Keratinocyte (primary cell): ENCODE measurements at regions of chr21 and their contacts with region 1.

Region 1: GRCh38 chr21:42089093-42089631 is 18.0 kb downstream of the UMODL1 start:
- DNase-seq: no peak
- H3K4me3 ChIP-seq: no peak overlapping the region
- H3K27ac ChIP-seq: no peak overlapping the region
- H3K4me1 ChIP-seq: peaks cover 6% of the 10 kb centered on the region
- H3K27me3 ChIP-seq: peaks cover 20% of the 10 kb centered on the region
- CTCF ChIP-seq: no peak

Region 2: DNA sequence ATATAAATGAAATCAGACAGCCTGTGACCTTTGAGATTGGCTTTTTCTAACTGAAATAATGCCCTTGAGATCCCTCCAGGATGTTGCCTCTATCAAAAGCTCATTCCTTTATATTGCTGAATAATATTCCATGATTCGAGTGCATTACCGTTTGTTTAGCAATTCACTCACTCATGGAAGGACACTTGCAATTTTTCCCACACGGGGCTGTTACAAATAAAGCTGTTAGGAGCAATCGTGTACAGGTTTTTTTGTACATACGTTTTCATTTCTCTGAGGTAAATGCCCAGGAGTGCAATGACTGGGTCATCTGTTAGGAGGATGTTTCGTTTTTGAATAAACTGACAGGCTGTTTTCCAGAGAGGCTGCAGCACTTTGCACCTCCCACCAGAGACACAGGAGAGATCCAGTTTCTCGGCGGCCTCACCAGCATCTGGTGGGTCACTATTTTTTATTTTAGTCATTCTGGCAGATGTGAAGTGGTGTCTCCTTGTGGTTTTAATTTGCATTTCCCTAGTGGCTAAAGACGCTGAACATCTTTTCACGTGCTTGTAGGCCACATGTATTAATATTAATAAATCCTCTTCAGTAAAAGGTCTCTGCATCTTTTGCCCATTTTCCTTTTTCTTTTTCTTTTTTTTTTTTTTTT is 221.0 kb before region 1 on chr21:
- dilution Hi-C with region 1: no loop called
- DNase-seq: no peak
- H3K4me3 ChIP-seq: no peak overlapping the region
- H3K27ac ChIP-seq: no peak overlapping the region
- H3K4me1 ChIP-seq: no peaks in the 10 kb centered on the region
- H3K27me3 ChIP-seq: no peaks in the 10 kb centered on the region
- CTCF ChIP-seq: no peak

Region 3: GRCh38 chr21:42019101-42019605 is 70.0 kb before region 1 on chr21:
- dilution Hi-C with region 1: loop called (anchors 5 kb)
- DNase-seq: peak; percentile 78
- H3K4me3 ChIP-seq: no peak overlapping the region
- H3K27ac ChIP-seq: peak overlapping the region; percentile 76
- H3K4me1 ChIP-seq: peaks cover 16% of the 10 kb centered on the region
- H3K27me3 ChIP-seq: peaks cover 16% of the 10 kb centered on the region
- CTCF ChIP-seq: no peak